PC-3 (cell line): ENCODE measurements at regions of chr17 and their contacts with region 1.

Region 1: GRCh38 chr17:51260125-51260880 is at the start of gene UTP18:
- DNase-seq: peak; percentile 99
- ATAC-seq: peak; percentile 79
- H3K4me3 ChIP-seq: peak within 1 kb of the TSS; percentile 89
- H3K27ac ChIP-seq: peak within 1 kb of the TSS; percentile 91
- H3K4me1 ChIP-seq: peaks cover 41% of the 10 kb centered on the region
- H3K27me3 ChIP-seq: no peaks in the 10 kb centered on the region
- CTCF ChIP-seq: no peak
- total RNA-seq, gene UTP18: 64.2 and 97.6 TPM in 2 replicates

Region 2: GRCh38 chr17:51166197-51166986 is 93.9 kb before region 1 on chr17 and contains the start of gene NME2:
- CTCF ChIA-PET with region 1: no interaction called
- POLR2A ChIA-PET with region 1: no interaction called
- intact Hi-C with region 1: loop called (anchors 5 kb)
- DNase-seq: peak; percentile 97
- ATAC-seq: peak; percentile 91
- H3K4me3 ChIP-seq: peak within 1 kb of the TSS; percentile 81
- H3K27ac ChIP-seq: peak within 1 kb of the TSS; percentile 73
- H3K4me1 ChIP-seq: peaks cover 21% of the 10 kb centered on the region
- H3K27me3 ChIP-seq: no peaks in the 10 kb centered on the region
- CTCF ChIP-seq: no peak
- total RNA-seq, gene NME2: 1,420 and 1,558 TPM in 2 replicates

Region 3: GRCh38 chr17:51275381-51275780 is 15.1 kb after region 1 on chr17:
- CTCF ChIA-PET with region 1: no interaction called
- POLR2A ChIA-PET with region 1: interaction called, 14 read pairs
- intact Hi-C with region 1: no loop called
- DNase-seq: no peak
- ATAC-seq: no peak
- H3K4me3 ChIP-seq: no peak overlapping the region
- H3K27ac ChIP-seq: no peak overlapping the region
- H3K4me1 ChIP-seq: no peaks in the 10 kb centered on the region
- H3K27me3 ChIP-seq: no peaks in the 10 kb centered on the region
- CTCF ChIP-seq: no peak